ENCODE measurements at regions of chr6 and their contacts with region 1.

Region 1: DNA sequence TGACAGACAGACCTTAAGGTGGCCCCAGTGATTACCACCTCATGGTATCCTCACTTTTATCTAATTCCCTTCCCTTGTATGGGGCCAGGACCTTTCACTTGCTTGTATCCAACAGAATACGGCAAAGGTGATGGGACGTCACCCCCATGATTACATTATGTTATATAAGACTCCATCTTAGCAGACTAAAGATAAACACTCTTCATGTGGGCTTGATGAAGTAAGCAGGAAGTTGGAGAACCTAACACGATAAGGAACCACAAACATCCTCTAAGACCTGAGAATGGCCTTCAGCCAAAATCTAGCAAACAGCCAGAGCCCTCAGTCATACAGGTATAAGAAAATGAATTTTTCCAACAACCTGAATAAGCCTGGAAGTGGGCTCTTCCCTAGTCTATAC is 8.0 kb downstream of the SLC17A3 start:
- DNase-seq: no peak
- ATAC-seq: no peak

Region 2: DNA sequence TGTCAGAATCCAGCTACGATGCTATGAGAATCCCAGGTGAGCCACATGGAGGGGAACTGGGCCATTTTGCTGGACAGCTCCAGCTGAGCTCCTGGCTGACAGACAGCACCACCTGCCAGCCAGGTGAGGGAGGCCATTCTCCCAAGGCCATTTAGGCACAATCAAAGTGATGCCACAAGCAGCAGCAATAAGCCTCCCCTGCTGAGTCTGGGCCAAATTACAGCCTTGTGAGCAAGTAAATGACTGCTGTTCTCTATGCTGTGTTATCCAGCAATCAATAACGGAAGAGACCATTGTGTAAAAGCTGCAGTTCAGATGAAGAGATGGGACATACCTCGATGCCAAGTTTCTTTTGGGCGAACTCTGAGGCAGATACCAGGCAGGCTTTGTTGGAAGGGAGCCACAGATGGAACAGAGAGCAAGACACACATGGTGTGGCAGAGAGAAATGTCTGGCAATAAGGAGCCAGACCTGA is 228.0 kb before region 1 on chr6:
- intact Hi-C with region 1: no loop called
- DNase-seq: peak in 1 of 2 donors; percentile 21
- ATAC-seq: peak; percentile 62

Region 3: GRCh38 chr6:25907475-25908014 is 41.5 kb after region 1 on chr6:
- intact Hi-C with region 1: loop called in 1 of 2 experiments (anchors 5 kb)
- DNase-seq: no peak
- ATAC-seq: no peak

Measured in left colon (tissue), 2 donors.